ENCODE measurements at regions of chr4 and their contacts with region 1.

Region 1: GRCh38 chr4:87118826-87119225 is 101.6 kb downstream of the KLHL8 start:
- DNase-seq: no peak
- H3K4me3 ChIP-seq: no peak overlapping the region
- H3K27ac ChIP-seq: no peak overlapping the region
- H3K4me1 ChIP-seq: peaks cover 0 to 5% (median 2%) of the 10 kb centered on the region in 4 experiments; a peak in 4 of 7 replicates
- H3K27me3 ChIP-seq: no peaks in the 10 kb centered on the region
- CTCF ChIP-seq: no peak
- EP300 ChIP-seq: no peak
- POLR2A ChIP-seq: peak in 1 of 2 experiments; percentile 32; a peak in 1 of 3 replicates
- RAD21 ChIP-seq: no peak

Region 2: DNA sequence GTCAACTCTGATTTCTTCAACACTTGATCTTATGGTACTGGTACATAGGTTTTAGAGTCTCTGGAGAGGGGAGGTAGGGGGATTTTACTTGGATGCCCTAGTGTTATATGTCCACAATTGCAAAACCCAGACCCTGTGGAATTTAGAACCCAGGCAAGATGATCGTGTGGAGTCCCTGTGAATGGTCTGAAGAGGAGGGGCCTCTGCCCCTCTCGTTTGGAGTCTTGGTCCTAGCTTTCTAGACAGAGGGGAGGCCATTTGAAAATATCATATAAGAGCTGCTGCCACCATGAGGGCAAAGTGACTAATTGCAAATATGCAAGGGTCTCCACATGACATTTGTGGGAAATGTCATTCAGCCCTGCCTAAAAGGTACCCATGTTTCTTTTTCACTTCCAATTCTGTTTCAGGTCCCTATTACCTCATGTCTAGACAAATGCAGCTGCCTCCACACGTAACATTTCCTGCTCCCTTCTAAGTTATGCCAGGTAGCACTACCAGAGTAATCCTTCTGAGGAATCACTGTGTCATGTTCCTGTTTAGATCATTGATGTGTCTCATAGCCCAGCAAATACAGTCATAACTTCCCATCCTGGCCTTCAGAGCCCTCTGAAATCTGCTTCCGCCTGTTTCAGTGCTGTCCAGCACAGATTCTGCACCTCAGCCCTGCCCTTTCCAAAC is 25.2 kb before region 1 on chr4:
- CTCF ChIA-PET with region 1: interaction called, 21 read pairs
- POLR2A ChIA-PET with region 1: no interaction called
- DNase-seq: no peak
- H3K4me3 ChIP-seq: no peak overlapping the region
- H3K27ac ChIP-seq: no peak overlapping the region
- H3K4me1 ChIP-seq: peaks cover 0 to 9% (median under 1%) of the 10 kb centered on the region in 4 experiments; a peak in 3 of 7 replicates
- H3K27me3 ChIP-seq: no peaks in the 10 kb centered on the region
- CTCF ChIP-seq: peak in 2 of 3 experiments; percentile 56 to 68; a peak in 3 of 4 replicates
- EP300 ChIP-seq: no peak
- POLR2A ChIP-seq: no peak
- RAD21 ChIP-seq: peak; percentile 73 to 79

Region 3: GRCh38 chr4:87105101-87105845 is 13.6 kb before region 1 on chr4:
- CTCF ChIA-PET with region 1: interaction called, 21 read pairs
- POLR2A ChIA-PET with region 1: interaction called, 3 read pairs
- DNase-seq: no peak
- H3K4me3 ChIP-seq: no peak overlapping the region
- H3K27ac ChIP-seq: no peak overlapping the region
- H3K4me1 ChIP-seq: peaks cover 0 to 1% (median 0%) of the 10 kb centered on the region in 4 experiments; a peak in 2 of 7 replicates
- H3K27me3 ChIP-seq: no peaks in the 10 kb centered on the region
- CTCF ChIP-seq: no peak
- EP300 ChIP-seq: no peak
- POLR2A ChIP-seq: no peak
- RAD21 ChIP-seq: no peak

Measured in H1 (cell line).